ENCODE measurements at regions of chr15 and their contacts with region 1.

Region 1: DNA sequence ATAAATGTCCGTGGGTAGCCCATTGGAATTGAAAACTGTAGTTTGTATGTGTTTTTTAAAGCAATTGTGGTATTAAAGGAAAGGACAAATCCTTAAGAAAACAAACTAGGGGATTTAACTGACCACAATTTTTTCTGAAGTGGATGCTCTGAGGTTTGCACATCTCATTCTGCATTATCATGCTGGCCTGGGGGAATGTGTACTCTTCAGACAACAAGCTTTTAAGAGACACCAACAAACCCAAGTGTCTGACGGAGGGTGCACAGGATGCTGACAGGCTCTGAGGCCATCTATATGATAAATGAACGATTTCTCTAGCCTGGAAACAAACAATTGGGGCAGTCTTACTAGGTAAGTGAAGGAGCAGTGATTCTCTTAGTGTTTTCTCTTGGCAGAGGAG is 9.1 kb downstream of the LINS1 start:
- DNase-seq: no peak
- H3K4me3 ChIP-seq: no peak overlapping the region
- H3K27ac ChIP-seq: no peak overlapping the region
- H3K4me1 ChIP-seq: no peaks in the 10 kb centered on the region
- H3K27me3 ChIP-seq: no peaks in the 10 kb centered on the region
- CTCF ChIP-seq: no peak
- POLR2A ChIP-seq: no peak

Region 2: DNA sequence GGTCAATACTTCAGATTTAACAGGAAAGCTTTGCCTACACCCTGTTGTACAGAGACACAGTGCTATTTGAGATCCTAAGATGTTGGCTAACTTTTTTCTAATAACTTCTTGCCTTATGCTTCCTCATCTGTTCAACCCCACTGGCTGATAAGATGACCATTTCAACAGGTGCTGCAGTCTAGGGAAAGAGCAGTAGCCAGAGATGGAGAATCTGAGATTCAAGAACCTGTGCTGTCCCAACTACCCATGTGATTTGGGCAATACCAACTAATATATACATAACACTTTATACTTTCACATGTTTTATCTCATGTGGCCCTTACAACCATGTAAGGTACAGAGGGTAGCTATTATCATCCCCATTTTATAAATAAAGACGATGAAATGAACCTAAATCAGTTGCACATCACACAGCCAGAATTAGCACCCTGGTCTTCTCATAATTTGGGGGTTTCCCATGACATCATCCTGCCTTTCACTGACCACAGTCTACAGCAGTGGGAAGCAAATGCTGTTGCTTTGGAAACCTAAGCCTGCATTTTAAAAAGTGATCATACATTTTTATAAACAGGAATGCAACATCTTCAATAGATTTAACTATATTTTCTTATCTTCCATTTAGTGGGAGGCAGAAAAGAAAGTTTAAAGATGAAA is 1353.2 kb before region 1 on chr15:
- intact Hi-C with region 1: loop called (anchors 5 kb)
- DNase-seq: no peak
- H3K4me3 ChIP-seq: no peak overlapping the region
- H3K27ac ChIP-seq: no peak overlapping the region
- H3K4me1 ChIP-seq: no peaks in the 10 kb centered on the region
- H3K27me3 ChIP-seq: no peaks in the 10 kb centered on the region
- CTCF ChIP-seq: no peak
- POLR2A ChIP-seq: no peak

Region 3: DNA sequence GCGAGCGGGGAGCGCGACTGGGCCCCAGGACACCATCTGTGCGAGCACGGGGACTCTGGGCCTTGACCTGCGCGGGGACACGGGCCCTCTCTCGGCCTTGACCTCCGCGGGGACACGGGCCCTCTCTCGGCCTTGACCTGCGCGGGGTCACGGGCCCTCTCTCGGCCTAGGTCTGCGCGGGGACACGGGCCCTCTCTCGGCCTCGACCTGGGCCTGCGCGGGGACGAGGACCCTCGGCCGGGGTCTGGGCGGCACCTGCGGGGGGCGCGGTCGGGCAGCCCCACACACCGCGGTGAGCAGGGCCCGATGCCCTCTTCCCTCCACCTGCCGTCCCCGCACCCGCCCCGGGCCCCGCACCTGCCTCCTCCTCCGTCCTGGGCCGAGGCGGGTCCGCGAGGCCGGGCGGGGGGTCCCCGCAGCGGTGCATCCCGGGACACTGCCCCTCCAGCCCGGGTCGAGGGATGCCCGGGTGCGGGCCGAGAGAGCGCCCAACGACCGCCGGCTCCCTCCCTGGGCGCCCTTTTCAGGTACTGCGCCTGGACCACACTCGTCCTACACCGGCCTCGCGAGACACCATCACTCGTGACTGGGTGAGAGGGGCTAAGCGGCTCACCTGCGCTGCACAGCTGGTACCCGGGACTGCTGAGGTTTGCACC is 48.5 kb before region 1 on chr15:
- intact Hi-C with region 1: no loop called
- DNase-seq: no peak
- H3K4me3 ChIP-seq: no peak overlapping the region
- H3K27ac ChIP-seq: no peak overlapping the region
- H3K4me1 ChIP-seq: no peaks in the 10 kb centered on the region
- H3K27me3 ChIP-seq: no peaks in the 10 kb centered on the region
- CTCF ChIP-seq: no peak
- POLR2A ChIP-seq: no peak

Region 4: GRCh38 chr15:100572362-100572983 is 20.4 kb before region 1 on chr15:
- intact Hi-C with region 1: no loop called
- DNase-seq: no peak
- H3K4me3 ChIP-seq: no peak overlapping the region
- H3K27ac ChIP-seq: no peak overlapping the region
- H3K4me1 ChIP-seq: no peaks in the 10 kb centered on the region
- H3K27me3 ChIP-seq: no peaks in the 10 kb centered on the region
- CTCF ChIP-seq: peak; percentile 16 to 59 (median 59)
- POLR2A ChIP-seq: no peak

Region 5: DNA sequence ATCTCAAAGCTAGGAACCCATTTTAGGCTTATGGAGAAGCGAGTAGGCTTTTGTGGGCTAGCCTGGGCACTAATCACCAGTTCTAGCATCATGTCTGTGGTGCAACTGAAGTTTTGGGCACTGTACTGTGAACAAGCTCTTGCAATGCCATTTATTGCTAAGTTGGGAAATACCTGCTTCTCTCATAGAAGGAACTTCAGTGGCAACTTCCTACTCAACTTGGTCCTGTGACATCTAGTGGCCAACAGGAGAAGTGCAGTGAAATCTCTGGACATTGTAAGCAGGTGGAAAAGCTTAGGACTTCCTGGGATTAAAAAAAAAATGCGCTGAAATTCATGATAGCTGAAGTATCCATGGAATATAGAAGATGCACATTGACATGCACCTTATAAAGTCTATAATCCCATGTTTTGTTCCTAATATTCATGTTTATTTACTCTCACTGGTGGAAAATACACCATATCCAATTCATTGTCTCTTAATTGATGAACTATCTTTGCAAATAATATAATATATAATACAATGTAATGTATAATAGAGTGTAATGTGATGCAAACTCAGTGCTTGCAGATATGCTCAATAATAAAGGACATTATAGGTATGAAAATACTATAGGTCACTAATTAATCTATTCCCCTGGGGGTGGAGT is 280.3 kb after region 1 on chr15:
- intact Hi-C with region 1: no loop called
- DNase-seq: peak in 1 of 2 donors; percentile 78
- H3K4me3 ChIP-seq: no peak overlapping the region
- H3K27ac ChIP-seq: peak overlapping the region; percentile 36 to 54
- H3K4me1 ChIP-seq: no peaks in the 10 kb centered on the region
- H3K27me3 ChIP-seq: no peaks in the 10 kb centered on the region
- CTCF ChIP-seq: peak; percentile 98 to 99 (median 99)
- POLR2A ChIP-seq: no peak